Activated naive CD4-positive, alpha-beta T cell treated with anti-CD3 and anti-CD28 coated beads for 36 hours (primary cell): ENCODE measurements at regions of chr13 and their contacts with region 1.

Region 1: DNA sequence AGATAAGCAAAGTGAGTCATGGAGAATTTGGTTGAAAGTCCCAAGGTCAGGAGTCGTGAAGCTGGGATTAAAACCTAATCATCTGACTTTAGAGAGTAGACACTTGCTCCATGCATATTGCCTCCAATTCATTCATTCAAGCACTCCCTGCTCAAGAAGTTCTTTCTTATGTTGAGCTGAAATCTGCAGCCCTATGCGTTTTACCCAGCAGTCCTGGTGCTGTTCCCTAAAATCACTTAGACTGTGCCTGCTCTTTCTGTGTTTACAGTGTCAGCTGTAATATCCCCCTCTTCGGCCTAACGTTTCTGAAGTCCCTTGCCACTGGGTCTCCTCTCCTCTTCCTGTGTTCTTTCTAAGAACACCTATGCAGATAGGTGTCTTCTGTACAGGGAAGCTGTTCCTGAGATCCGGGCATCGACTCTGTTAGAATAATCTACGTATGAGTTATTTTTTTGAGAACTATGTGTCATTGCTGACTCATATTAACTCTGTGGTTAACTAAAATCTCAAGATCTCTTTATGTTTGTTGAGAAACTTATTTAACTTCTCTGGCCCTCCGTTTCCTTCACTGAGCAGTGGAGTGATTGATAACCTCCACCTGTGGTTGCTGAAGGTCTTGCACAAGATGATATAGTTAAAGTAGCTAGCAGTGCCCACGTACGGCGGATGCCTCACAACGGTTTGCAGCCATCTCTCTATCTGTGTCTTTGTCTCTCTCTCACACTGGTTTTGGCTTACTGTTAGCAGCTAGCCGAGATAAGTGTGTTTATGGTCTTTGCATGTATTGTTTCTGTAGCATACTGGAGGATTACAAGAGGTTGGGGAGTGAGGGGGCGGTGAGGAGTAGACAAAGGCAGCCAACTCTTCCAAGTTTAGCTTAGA is 4.7 kb downstream of the ALOX5AP start:
- DNase-seq: peak; percentile 80
- H3K4me3 Mint-ChIP-seq: peak overlapping the region; percentile 73
- H3K27ac Mint-ChIP-seq: peak overlapping the region; percentile 88
- H3K4me1 Mint-ChIP-seq: peaks cover 78% of the 10 kb centered on the region
- H3K27me3 Mint-ChIP-seq: peaks cover 2% of the 10 kb centered on the region

Region 2: DNA sequence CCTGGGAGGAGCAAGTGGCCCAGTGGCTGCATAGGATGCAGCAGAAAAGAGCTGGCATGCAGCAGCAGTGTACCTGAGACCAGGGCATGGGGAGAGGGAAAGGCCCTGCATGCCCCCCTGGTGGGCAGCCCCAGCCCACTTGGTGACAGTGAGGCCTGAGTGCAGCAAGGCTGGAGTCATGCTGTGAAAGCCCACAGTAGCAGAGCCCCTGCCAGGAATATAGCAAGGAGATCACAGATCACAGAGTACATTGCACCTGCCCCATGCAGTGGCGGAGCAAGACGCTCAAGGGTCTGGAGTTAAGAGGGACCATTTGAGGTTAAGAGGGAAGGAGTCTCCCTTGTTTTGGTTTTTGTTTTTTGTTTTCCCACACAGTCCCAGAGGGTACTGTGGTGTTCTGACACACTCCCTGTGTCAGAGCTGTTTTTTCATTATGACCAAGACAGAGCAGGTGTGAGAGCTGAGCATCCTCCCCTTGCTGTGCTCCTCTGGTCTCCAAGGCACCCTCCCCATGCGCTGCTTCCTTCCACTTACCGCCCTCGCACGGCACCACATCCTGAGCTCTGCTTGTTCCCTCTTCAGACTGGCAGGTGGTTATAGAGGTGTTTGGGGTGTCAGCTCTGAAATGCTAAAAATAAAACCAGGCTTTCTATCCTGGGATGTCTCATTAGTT is 804.6 kb before region 1 on chr13:
- CTCF ChIA-PET with region 1: no interaction called
- intact Hi-C with region 1: loop called (anchors 10 kb)
- DNase-seq: peak; percentile 94
- H3K4me3 Mint-ChIP-seq: peak overlapping the region; percentile 67
- H3K27ac Mint-ChIP-seq: peak overlapping the region; percentile 83
- H3K4me1 Mint-ChIP-seq: peaks cover 39% of the 10 kb centered on the region
- H3K27me3 Mint-ChIP-seq: no peaks in the 10 kb centered on the region

Region 3: GRCh38 chr13:30371649-30372265 is 368.2 kb before region 1 on chr13:
- CTCF ChIA-PET with region 1: no interaction called
- intact Hi-C with region 1: loop called (anchors 1 kb)
- DNase-seq: peak; percentile 87
- H3K4me3 Mint-ChIP-seq: peak overlapping the region; percentile 58
- H3K27ac Mint-ChIP-seq: peak overlapping the region; percentile 87
- H3K4me1 Mint-ChIP-seq: peaks cover 75% of the 10 kb centered on the region
- H3K27me3 Mint-ChIP-seq: no peaks in the 10 kb centered on the region

Region 4: GRCh38 chr13:30617315-30618185 is 122.5 kb before region 1 on chr13 and contains the start of gene USPL1:
- CTCF ChIA-PET with region 1: interaction called, 4 read pairs
- intact Hi-C with region 1: loop called (anchors 1 kb)
- DNase-seq: peak; percentile 98
- H3K4me3 Mint-ChIP-seq: no peak within 1 kb of the TSS
- H3K27ac Mint-ChIP-seq: no peak within 1 kb of the TSS
- H3K4me1 Mint-ChIP-seq: peaks cover 29% of the 10 kb centered on the region
- H3K27me3 Mint-ChIP-seq: no peaks in the 10 kb centered on the region
- total RNA-seq, gene USPL1: 10.7 to 11.3 TPM

Region 5: GRCh38 chr13:30711375-30711774 is 28.6 kb before region 1 on chr13:
- CTCF ChIA-PET with region 1: no interaction called
- intact Hi-C with region 1: loop called (anchors 1 kb)
- DNase-seq: no peak
- H3K4me3 Mint-ChIP-seq: no peak overlapping the region
- H3K27ac Mint-ChIP-seq: no peak overlapping the region
- H3K4me1 Mint-ChIP-seq: peaks cover 4% of the 10 kb centered on the region
- H3K27me3 Mint-ChIP-seq: peaks cover 2% of the 10 kb centered on the region

Region 6: GRCh38 chr13:31073859-31074718 is 334.1 kb after region 1 on chr13:
- CTCF ChIA-PET with region 1: no interaction called
- intact Hi-C with region 1: loop called (anchors 1 kb)
- DNase-seq: peak; percentile 70
- H3K4me3 Mint-ChIP-seq: no peak overlapping the region
- H3K27ac Mint-ChIP-seq: no peak overlapping the region
- H3K4me1 Mint-ChIP-seq: peaks cover 9% of the 10 kb centered on the region
- H3K27me3 Mint-ChIP-seq: peaks cover 3% of the 10 kb centered on the region

Region 7: GRCh38 chr13:32427852-32428580 is 1688.0 kb after region 1 on chr13 and contains the start of gene N4BP2L1:
- CTCF ChIA-PET with region 1: no interaction called
- intact Hi-C with region 1: no loop called
- DNase-seq: peak; percentile 95
- H3K4me3 Mint-ChIP-seq: peak within 1 kb of the TSS; percentile 94
- H3K27ac Mint-ChIP-seq: peak within 1 kb of the TSS; percentile 97
- H3K4me1 Mint-ChIP-seq: peaks cover 31% of the 10 kb centered on the region
- H3K27me3 Mint-ChIP-seq: no peaks in the 10 kb centered on the region
- total RNA-seq, gene N4BP2L1: 22.6 TPM